Left ventricle myocardium inferior (tissue), 1 donor: ENCODE measurements at regions of chr7 and their contacts with region 1.

Region 1: GRCh38 chr7:1065263-1066260 is 21.2 kb downstream of the GPR146 start:
- DNase-seq: peak; percentile 88
- H3K4me3 ChIP-seq: peak overlapping the region; percentile 55
- H3K27ac ChIP-seq: no peak overlapping the region
- H3K4me1 ChIP-seq: peaks cover 22% of the 10 kb centered on the region
- H3K27me3 ChIP-seq: no peaks in the 10 kb centered on the region
- CTCF ChIP-seq: peak; percentile 98

Region 2: DNA sequence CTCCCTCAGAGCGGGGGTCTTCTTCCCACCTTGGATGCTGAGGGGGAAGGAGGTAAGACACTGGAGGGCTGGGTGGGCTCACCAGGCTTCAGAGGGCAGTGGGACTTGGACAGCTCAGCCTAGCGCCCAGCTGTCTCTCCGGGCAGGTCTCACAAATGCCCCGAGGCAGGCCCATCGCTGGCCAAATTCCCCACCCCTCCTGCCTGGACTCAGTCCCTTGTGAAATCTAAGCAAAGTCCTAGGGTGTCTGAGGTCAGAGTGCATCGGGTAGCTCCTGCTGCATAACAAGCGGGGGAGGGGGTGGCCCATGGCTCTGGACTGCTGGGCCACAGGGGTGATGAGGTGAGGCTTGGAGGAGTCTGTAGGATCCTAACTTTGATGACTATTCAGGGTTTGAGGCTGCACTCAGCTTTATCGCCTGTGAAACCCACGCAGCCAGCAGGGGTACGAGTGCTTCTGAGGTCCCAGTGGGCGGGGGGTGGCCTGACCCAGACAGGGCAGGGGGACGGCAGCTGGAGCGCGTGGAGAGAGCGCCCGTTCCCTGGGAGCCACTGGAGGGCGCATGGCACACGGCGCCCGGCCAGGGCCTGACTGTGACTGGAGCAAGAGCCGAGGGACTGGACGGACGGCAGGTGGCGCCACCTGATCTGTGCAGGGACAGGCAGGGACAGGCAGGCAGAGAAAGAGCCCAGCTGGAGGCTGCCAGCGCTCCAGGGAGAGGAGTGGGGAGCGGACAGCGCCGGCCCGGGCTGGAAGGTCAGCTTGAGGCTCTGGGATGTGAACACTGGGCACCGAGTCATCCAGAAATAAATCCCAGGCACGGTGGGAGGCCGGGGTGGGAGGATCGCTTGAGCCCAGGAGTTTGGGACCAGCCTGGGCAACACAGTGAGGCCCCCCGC is 72.6 kb before region 1 on chr7:
- intact Hi-C with region 1: loop called (anchors 2 kb)
- DNase-seq: peak; percentile 95
- H3K4me3 ChIP-seq: no peak overlapping the region
- H3K27ac ChIP-seq: no peak overlapping the region
- H3K4me1 ChIP-seq: peaks cover 27% of the 10 kb centered on the region
- H3K27me3 ChIP-seq: peaks cover 16% of the 10 kb centered on the region
- CTCF ChIP-seq: peak; percentile 100

Region 3: GRCh38 chr7:1223196-1223981 is 157.8 kb after region 1 on chr7:
- intact Hi-C with region 1: no loop called
- DNase-seq: no peak
- H3K4me3 ChIP-seq: no peak overlapping the region
- H3K27ac ChIP-seq: no peak overlapping the region
- H3K4me1 ChIP-seq: peaks cover 19% of the 10 kb centered on the region
- H3K27me3 ChIP-seq: peaks cover 100% of the 10 kb centered on the region
- CTCF ChIP-seq: no peak